Esophagus muscularis mucosa (tissue), 4 donors: ENCODE measurements at regions of chr5 and their contacts with region 1.

Region 1: GRCh38 chr5:151581812-151582583 is 9.1 kb downstream of the FAT2 start:
- DNase-seq: no peak
- H3K4me3 ChIP-seq: no peak overlapping the region
- H3K27ac ChIP-seq: no peak overlapping the region
- H3K4me1 ChIP-seq: no peaks in the 10 kb centered on the region
- H3K27me3 ChIP-seq: no peaks in the 10 kb centered on the region
- CTCF ChIP-seq: no peak
- EP300 ChIP-seq: no peak
- POLR2A ChIP-seq: no peak

Region 2: GRCh38 chr5:151378616-151379015 is 203.4 kb before region 1 on chr5:
- intact Hi-C with region 1: loop called (anchors 5 kb)
- DNase-seq: no peak
- H3K4me3 ChIP-seq: no peak overlapping the region
- H3K27ac ChIP-seq: no peak overlapping the region
- H3K4me1 ChIP-seq: no peaks in the 10 kb centered on the region
- H3K27me3 ChIP-seq: no peaks in the 10 kb centered on the region
- CTCF ChIP-seq: no peak
- EP300 ChIP-seq: no peak
- POLR2A ChIP-seq: no peak